Cardiac septum (tissue), 1 donor: ENCODE measurements at regions of chr15 and their contacts with region 1.

Region 1: DNA sequence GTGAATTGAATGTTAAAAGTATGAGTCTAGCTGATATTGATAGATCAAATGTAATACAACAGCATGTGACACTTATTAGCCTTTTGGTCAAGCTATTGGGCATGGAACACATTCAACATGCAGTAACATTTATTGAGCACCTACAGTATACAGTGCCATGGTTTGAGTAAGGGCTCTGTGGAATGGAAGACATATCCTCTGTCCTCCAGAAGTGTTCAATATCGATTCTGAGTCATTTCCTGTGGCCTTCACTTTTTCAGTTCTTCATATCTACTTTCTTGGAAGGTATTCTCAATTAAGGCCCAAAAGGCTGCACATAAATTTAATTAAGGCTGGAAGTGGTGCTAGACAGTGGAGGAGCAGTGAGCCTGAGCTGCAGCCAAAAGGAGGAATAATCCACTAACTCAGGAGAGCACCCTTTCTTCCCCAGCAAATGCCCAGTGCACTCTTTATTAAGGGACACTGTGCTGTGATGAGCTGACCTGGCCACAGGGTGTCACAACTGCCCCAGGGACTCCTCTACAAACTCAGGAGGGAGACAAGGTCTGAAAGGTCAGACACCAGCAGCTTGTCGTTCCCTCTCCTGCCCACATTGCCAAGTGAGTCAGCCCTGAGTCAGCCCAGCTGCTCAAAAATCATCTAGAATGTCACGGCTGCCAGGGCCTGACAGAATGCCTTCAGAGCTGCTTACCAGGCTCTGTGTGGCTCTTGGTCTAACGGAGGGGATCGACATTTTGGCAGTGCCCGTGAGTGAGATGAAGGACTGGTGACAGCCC is 544.8 kb downstream of the AGBL1 start:
- DNase-seq: peak; percentile 85

Region 2: GRCh38 chr15:86915811-86916331 is 291.4 kb after region 1 on chr15:
- intact Hi-C with region 1: loop called (anchors 10 kb)
- DNase-seq: no peak

Region 3: GRCh38 chr15:87604857-87605446 is 980.5 kb after region 1 on chr15:
- intact Hi-C with region 1: loop called (anchors 10 kb)
- DNase-seq: no peak